Naive thymus-derived CD4-positive, alpha-beta T cell (primary cell): ENCODE measurements at regions of chr13 and their contacts with region 1.

Region 1: GRCh38 chr13:73765651-73766384 is 368.4 kb downstream of the KLF12 start:
- DNase-seq: peak; percentile 29 to 91 (median 85)
- ATAC-seq: peak; percentile 92
- H3K4me3 ChIP-seq: peak overlapping the region; percentile 52
- H3K4me3 Mint-ChIP-seq: peak overlapping the region; percentile 77 to 87 (median 85)
- H3K27ac ChIP-seq: peak overlapping the region; percentile 77
- H3K27ac Mint-ChIP-seq: peak overlapping the region; percentile 90 to 100 (median 98)
- H3K4me1 ChIP-seq: peaks cover 37 to 52% of the 10 kb centered on the region in 2 donors
- H3K4me1 Mint-ChIP-seq: peaks cover 37 to 92% (median 89%) of the 10 kb centered on the region in 7 donors
- H3K27me3 ChIP-seq: no peaks in the 10 kb centered on the region
- H3K27me3 Mint-ChIP-seq: no peaks in the 10 kb centered on the region

Region 2: GRCh38 chr13:73481886-73482445 is 283.9 kb before region 1 on chr13:
- CTCF ChIA-PET with region 1: no interaction called
- POLR2A ChIA-PET with region 1: no interaction called
- intact Hi-C with region 1: no loop called
- DNase-seq: no peak
- ATAC-seq: no peak
- H3K4me3 ChIP-seq: no peak overlapping the region
- H3K4me3 Mint-ChIP-seq: no peak overlapping the region
- H3K27ac ChIP-seq: no peak overlapping the region
- H3K27ac Mint-ChIP-seq: no peak overlapping the region
- H3K4me1 ChIP-seq: no peaks in the 10 kb centered on the region
- H3K4me1 Mint-ChIP-seq: no peaks in the 10 kb centered on the region
- H3K27me3 ChIP-seq: no peaks in the 10 kb centered on the region
- H3K27me3 Mint-ChIP-seq: no peaks in the 10 kb centered on the region

Region 3: DNA sequence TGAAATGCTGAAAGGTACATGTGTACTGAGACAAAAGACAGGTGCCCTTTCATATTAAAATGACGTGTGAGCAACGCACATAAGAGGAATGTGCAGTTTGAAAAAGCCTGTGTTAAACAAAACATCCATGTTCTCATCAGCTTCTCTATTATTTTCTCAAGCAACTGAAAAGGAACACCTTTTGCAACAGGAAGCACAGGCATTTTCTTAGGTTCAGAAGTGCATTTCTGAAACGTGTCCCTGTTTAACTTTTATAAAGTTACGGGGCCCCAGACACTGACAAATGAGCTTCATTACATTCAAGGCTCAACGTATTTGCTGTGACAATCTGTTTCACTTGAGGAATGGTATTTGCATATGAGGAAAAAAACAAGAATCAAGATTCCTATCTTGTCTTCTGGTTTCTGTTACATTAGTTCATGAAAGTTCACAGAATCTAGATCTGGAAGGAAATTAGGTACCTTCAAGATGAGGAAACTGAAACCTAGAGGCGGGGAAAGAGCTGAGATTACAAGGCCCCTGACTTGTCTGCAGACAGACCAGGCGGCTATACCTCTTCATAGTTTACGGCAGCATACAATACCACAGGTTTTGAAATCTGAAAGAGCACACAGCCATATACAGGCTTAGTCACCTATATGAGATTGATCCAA is 63.3 kb before region 1 on chr13:
- CTCF ChIA-PET with region 1: no interaction called
- POLR2A ChIA-PET with region 1: interaction called, 4 read pairs
- intact Hi-C with region 1: loop called in 1 of 2 experiments (anchors 1 kb)
- DNase-seq: peak in 7 of 9 donors; percentile 70 to 86 (median 82)
- ATAC-seq: peak; percentile 83
- H3K4me3 ChIP-seq: peak overlapping the region; percentile 39
- H3K4me3 Mint-ChIP-seq: peak overlapping the region; percentile 65 to 92 (median 80)
- H3K27ac ChIP-seq: peak overlapping the region; percentile 79
- H3K27ac Mint-ChIP-seq: peak overlapping the region; percentile 91 to 100 (median 98)
- H3K4me1 ChIP-seq: peaks cover 0 to 22% of the 10 kb centered on the region in 2 donors
- H3K4me1 Mint-ChIP-seq: peaks cover 18 to 66% (median 49%) of the 10 kb centered on the region in 7 donors
- H3K27me3 ChIP-seq: no peaks in the 10 kb centered on the region
- H3K27me3 Mint-ChIP-seq: no peaks in the 10 kb centered on the region

Region 4: DNA sequence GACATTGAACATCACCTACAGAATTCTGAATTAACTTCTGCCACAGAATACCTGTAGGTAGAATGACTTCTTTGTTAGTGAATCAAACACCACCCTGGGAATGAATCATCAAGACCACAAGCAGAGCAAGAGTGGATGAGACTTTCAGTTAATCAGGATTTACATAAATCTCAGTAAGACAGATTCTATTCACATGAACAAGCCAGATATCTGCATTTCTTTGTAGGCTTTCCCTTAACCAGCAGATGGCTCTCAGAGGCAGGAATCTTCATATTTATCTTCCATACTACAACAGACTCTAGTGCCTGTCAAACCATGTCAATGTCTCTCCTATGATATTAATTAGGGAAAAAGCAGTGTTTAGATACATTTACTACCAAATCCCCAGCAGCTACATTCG is 43.7 kb before region 1 on chr13:
- CTCF ChIA-PET with region 1: interaction called, 3 read pairs
- POLR2A ChIA-PET with region 1: interaction called, 4 read pairs
- intact Hi-C with region 1: loop called in 1 of 2 experiments (anchors 1 kb)
- DNase-seq: peak in 3 of 9 donors; percentile 17 to 23 (median 23)
- ATAC-seq: peak; percentile 44
- H3K4me3 ChIP-seq: no peak overlapping the region
- H3K4me3 Mint-ChIP-seq: no peak overlapping the region
- H3K27ac ChIP-seq: no peak overlapping the region
- H3K27ac Mint-ChIP-seq: peak overlapping the region in 8 of 9 donors; percentile 14 to 92 (median 82)
- H3K4me1 ChIP-seq: peaks cover 6 to 7% of the 10 kb centered on the region in 2 donors
- H3K4me1 Mint-ChIP-seq: peaks cover 8 to 55% (median 50%) of the 10 kb centered on the region in 7 donors
- H3K27me3 ChIP-seq: no peaks in the 10 kb centered on the region
- H3K27me3 Mint-ChIP-seq: peaks cover 0 to 7% (median 0%) of the 10 kb centered on the region in 5 donors

Region 5: GRCh38 chr13:73782450-73783449 is 16.9 kb after region 1 on chr13:
- CTCF ChIA-PET with region 1: interaction called, 6 read pairs
- POLR2A ChIA-PET with region 1: interaction called, 9 read pairs
- intact Hi-C with region 1: loop called in 1 of 2 experiments (anchors 2 kb)
- DNase-seq: no peak
- ATAC-seq: no peak
- H3K4me3 ChIP-seq: no peak overlapping the region
- H3K4me3 Mint-ChIP-seq: no peak overlapping the region
- H3K27ac ChIP-seq: no peak overlapping the region
- H3K27ac Mint-ChIP-seq: peak overlapping the region in 8 of 9 donors; percentile 6 to 87 (median 74)
- H3K4me1 ChIP-seq: no peaks in the 10 kb centered on the region
- H3K4me1 Mint-ChIP-seq: peaks cover 0 to 58% (median 50%) of the 10 kb centered on the region in 7 donors
- H3K27me3 ChIP-seq: no peaks in the 10 kb centered on the region
- H3K27me3 Mint-ChIP-seq: no peaks in the 10 kb centered on the region

Region 6: GRCh38 chr13:73835138-73835721 is 69.4 kb after region 1 on chr13:
- CTCF ChIA-PET with region 1: interaction called, 5 read pairs
- POLR2A ChIA-PET with region 1: interaction called, 6 read pairs
- intact Hi-C with region 1: loop called in 1 of 2 experiments (anchors 1 kb)
- DNase-seq: peak in 7 of 9 donors; percentile 16 to 60 (median 54)
- ATAC-seq: peak; percentile 64
- H3K4me3 ChIP-seq: no peak overlapping the region
- H3K4me3 Mint-ChIP-seq: no peak overlapping the region
- H3K27ac ChIP-seq: no peak overlapping the region
- H3K27ac Mint-ChIP-seq: no peak overlapping the region
- H3K4me1 ChIP-seq: peaks cover 7 to 41% of the 10 kb centered on the region in 2 donors
- H3K4me1 Mint-ChIP-seq: peaks cover 5 to 71% (median 43%) of the 10 kb centered on the region in 7 donors
- H3K27me3 ChIP-seq: no peaks in the 10 kb centered on the region
- H3K27me3 Mint-ChIP-seq: no peaks in the 10 kb centered on the region

Region 7: DNA sequence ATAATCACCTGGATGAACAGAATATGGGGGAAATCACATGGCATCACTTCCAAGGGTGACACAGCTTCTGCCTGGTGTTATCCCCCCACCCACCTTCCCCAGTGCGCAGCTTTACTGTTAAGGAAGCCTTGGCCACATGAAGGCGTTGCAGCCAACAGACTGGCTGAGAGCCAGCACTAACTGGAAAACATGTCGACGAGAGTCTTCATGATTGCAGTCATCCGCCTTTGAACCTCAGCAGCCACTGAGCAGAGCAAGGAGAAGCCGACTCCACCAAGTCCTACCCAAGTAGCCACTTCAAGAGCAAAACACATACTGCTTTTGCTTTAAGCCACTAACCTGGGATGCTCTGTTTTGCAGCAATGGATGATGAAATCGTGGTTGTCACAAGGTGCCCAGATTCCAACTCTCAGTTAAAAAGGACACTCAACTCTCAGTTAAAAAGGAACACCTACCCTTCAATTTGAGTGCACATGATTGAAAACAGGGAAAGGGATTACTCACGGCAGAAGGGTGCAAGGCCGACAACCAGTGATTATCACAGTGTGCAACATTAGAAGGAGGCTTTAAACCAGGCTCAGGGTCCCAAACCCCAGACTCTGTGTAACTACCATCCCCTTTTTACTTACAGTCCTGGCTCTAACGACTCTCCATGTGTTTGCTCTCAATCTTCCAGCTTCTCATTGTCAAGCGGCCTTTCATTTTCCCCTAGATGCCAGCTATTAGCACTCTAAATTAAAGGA is 219.3 kb after region 1 on chr13:
- CTCF ChIA-PET with region 1: no interaction called
- POLR2A ChIA-PET with region 1: interaction called, 5 read pairs
- intact Hi-C with region 1: loop called in 1 of 2 experiments (anchors 5 kb)
- DNase-seq: peak; percentile 48 to 95 (median 91)
- ATAC-seq: peak; percentile 94
- H3K4me3 ChIP-seq: peak overlapping the region; percentile 14
- H3K4me3 Mint-ChIP-seq: peak overlapping the region in 9 of 10 donors; percentile 67 to 89 (median 78)
- H3K27ac ChIP-seq: peak overlapping the region; percentile 82
- H3K27ac Mint-ChIP-seq: peak overlapping the region in 1 of 9 donors; percentile 80
- H3K4me1 ChIP-seq: peaks cover 28 to 52% of the 10 kb centered on the region in 2 donors
- H3K4me1 Mint-ChIP-seq: peaks cover 28 to 54% (median 44%) of the 10 kb centered on the region in 7 donors
- H3K27me3 ChIP-seq: no peaks in the 10 kb centered on the region
- H3K27me3 Mint-ChIP-seq: no peaks in the 10 kb centered on the region

Region 8: GRCh38 chr13:74070065-74070464 is 304.2 kb after region 1 on chr13:
- CTCF ChIA-PET with region 1: interaction called, 3 read pairs
- POLR2A ChIA-PET with region 1: no interaction called
- intact Hi-C with region 1: loop called in 1 of 2 experiments (anchors 5 kb)
- DNase-seq: peak in 7 of 9 donors; percentile 59 to 82 (median 79)
- ATAC-seq: peak; percentile 85
- H3K4me3 ChIP-seq: peak overlapping the region; percentile 32
- H3K4me3 Mint-ChIP-seq: peak overlapping the region; percentile 58 to 88 (median 74)
- H3K27ac ChIP-seq: no peak overlapping the region
- H3K27ac Mint-ChIP-seq: peak overlapping the region; percentile 56 to 93 (median 83)
- H3K4me1 ChIP-seq: peaks cover 46 to 51% of the 10 kb centered on the region in 2 donors
- H3K4me1 Mint-ChIP-seq: peaks cover 49 to 90% (median 83%) of the 10 kb centered on the region in 7 donors
- H3K27me3 ChIP-seq: no peaks in the 10 kb centered on the region
- H3K27me3 Mint-ChIP-seq: no peaks in the 10 kb centered on the region